ENCODE measurements at regions of chr15 and their contacts with region 1.

Region 1: GRCh38 chr15:63504247-63504978 is at the start of gene USP3:
- DNase-seq: peak; percentile 98
- H3K4me3 ChIP-seq: peak within 1 kb of the TSS; percentile 77 to 97 (median 88)
- H3K27ac ChIP-seq: peak within 1 kb of the TSS; percentile 99 to 100 (median 99)
- H3K4me1 ChIP-seq: peaks cover 65 to 74% (median 71%) of the 10 kb centered on the region in 4 donors
- H3K27me3 ChIP-seq: peaks cover 0 to 5% (median 0%) of the 10 kb centered on the region in 4 donors
- CTCF ChIP-seq: peak in 1 of 3 experiments; percentile 65
- EP300 ChIP-seq: no peak
- POLR2A ChIP-seq: peak; percentile 56
- total RNA-seq, gene USP3: 40.1 to 46.5 (median 41.3) TPM

Region 2: GRCh38 chr15:63553388-63553791 is 49.0 kb after region 1 on chr15:
- intact Hi-C with region 1: loop called (anchors 5 kb)
- DNase-seq: no peak
- H3K4me3 ChIP-seq: peak overlapping the region; percentile 1 to 17 (median 10)
- H3K27ac ChIP-seq: peak overlapping the region; percentile 56 to 67 (median 60)
- H3K4me1 ChIP-seq: peaks cover 19 to 55% (median 47%) of the 10 kb centered on the region in 4 donors
- H3K27me3 ChIP-seq: no peaks in the 10 kb centered on the region
- CTCF ChIP-seq: no peak
- EP300 ChIP-seq: no peak
- POLR2A ChIP-seq: no peak

Measured in esophagus muscularis mucosa (tissue), 4 donors.